Right lobe of liver (tissue), 6 donors: ENCODE measurements at regions of chr17 and their contacts with region 1.

Region 1: GRCh38 chr17:82781894-82782274 is 30.0 kb downstream of the TBCD start:
- DNase-seq: peak; percentile 81 to 85 (median 81)
- ATAC-seq: peak; percentile 94 to 99 (median 97)
- H3K4me3 ChIP-seq: no peak overlapping the region
- H3K27ac ChIP-seq: no peak overlapping the region
- H3K4me1 ChIP-seq: no peaks in the 10 kb centered on the region
- H3K27me3 ChIP-seq: no peaks in the 10 kb centered on the region
- CTCF ChIP-seq: peak; percentile 95 to 98 (median 96)
- POLR2A ChIP-seq: no peak

Region 2: DNA sequence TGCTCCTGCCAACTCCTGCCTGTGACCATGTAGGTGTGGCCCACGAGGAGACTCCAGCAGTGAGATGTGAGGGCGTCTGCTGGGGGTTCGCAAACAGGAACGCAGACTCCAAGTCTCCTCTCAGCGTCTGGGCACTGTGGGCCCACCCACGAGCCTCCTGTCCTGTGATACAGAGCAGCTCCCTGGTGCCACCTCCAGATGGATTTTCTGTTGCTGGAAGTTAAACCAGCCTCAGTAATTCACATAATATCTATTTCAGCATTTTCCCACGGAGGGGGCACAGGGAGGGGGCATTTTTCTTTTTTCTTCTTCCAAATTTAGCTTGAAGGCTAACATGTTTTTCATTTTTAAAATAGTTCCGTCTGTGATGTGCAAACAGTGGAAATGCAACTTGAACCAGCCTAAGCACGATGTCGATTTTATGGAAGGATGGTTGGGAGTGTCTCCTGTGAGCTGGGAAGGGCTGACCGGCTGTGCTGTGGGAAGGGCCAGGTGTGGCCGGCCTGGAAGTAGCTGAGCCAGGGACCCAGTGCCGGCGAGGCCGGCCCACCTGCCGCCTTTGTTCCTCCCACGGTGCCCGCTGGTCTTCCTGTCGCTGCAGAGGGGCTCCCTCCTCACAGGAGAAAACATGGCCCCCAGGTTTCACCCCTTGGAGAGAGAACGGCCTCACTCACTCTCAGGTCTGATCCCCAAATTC is 79.5 kb before region 1 on chr17:
- intact Hi-C with region 1: no loop called
- DNase-seq: no peak
- ATAC-seq: no peak
- H3K4me3 ChIP-seq: no peak overlapping the region
- H3K27ac ChIP-seq: no peak overlapping the region
- H3K4me1 ChIP-seq: peaks cover 0 to 12% (median 3%) of the 10 kb centered on the region in 4 donors
- H3K27me3 ChIP-seq: no peaks in the 10 kb centered on the region
- CTCF ChIP-seq: no peak
- POLR2A ChIP-seq: no peak

Region 3: DNA sequence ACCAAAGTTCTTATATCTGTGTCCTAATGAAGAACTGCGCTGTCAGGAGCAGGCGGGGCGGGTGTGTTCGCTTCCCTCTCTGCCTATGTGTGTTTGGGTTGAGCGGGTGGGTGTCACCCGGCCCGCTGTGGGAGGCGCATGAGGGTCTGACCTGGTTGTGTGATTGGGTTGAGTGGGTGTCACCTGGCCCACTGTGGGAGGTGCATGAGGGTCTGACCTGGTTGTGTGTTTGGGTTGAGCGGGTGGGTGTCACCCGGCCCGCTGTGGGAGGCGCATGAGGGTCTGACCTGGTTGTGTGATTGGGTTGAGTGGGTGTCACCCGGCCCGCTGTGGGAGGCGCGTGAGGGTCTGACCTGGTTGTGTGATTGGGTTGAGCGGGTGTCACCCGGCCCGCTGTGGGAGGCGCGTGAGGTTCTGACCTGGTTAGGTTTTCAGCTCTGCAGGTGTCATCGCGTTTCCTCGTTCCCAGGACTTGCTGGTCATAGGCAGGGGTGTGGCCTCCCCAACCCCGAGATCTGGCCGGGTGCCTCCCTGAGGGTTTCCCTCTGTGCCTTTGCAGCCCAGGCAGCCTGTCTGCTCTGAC is 127.5 kb after region 1 on chr17:
- intact Hi-C with region 1: loop called (anchors 10 kb)
- DNase-seq: peak in 1 of 3 donors; percentile 17
- ATAC-seq: no peak
- H3K4me3 ChIP-seq: no peak overlapping the region
- H3K27ac ChIP-seq: no peak overlapping the region
- H3K4me1 ChIP-seq: no peaks in the 10 kb centered on the region
- H3K27me3 ChIP-seq: no peaks in the 10 kb centered on the region
- CTCF ChIP-seq: no peak
- POLR2A ChIP-seq: no peak

Region 4: GRCh38 chr17:82917691-82918345 is 135.9 kb after region 1 on chr17:
- intact Hi-C with region 1: loop called in 1 of 2 experiments (anchors 10 kb)
- DNase-seq: no peak
- ATAC-seq: peak; percentile 63 to 76 (median 70)
- H3K4me3 ChIP-seq: no peak overlapping the region
- H3K27ac ChIP-seq: peak overlapping the region in 1 of 3 donors; percentile 60
- H3K4me1 ChIP-seq: no peaks in the 10 kb centered on the region
- H3K27me3 ChIP-seq: no peaks in the 10 kb centered on the region
- CTCF ChIP-seq: peak; percentile 24 to 50 (median 46)
- POLR2A ChIP-seq: no peak

Region 5: DNA sequence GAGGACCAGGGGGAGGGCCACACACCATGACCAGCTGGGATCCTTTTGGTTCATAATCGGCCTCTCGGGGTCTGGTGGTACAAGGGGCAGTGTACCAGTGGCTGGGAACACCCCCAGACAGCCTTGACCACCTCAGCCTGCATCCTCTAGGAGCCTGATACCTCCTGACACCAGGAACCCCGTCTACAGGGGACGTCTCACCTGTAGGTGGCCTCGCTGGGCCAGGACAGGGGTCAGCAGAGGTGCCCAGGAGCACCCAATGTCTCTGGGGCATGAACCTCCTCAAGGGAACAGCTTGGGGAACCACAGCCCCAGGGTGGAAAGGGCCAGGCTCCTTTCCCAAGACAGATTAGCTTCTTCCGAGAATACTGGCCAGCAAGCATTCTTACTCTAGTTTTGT is 295.0 kb after region 1 on chr17:
- intact Hi-C with region 1: no loop called
- DNase-seq: no peak
- ATAC-seq: peak in 3 of 4 donors; percentile 4 to 14 (median 10)
- H3K4me3 ChIP-seq: no peak overlapping the region
- H3K27ac ChIP-seq: no peak overlapping the region
- H3K4me1 ChIP-seq: no peaks in the 10 kb centered on the region
- H3K27me3 ChIP-seq: peaks cover 0 to 6% of the 10 kb centered on the region in 2 donors
- CTCF ChIP-seq: peak in 1 of 4 donors; percentile 27
- POLR2A ChIP-seq: no peak